A549 (cell line): ENCODE measurements at regions of chr22 and their contacts with region 1.

Region 1: DNA sequence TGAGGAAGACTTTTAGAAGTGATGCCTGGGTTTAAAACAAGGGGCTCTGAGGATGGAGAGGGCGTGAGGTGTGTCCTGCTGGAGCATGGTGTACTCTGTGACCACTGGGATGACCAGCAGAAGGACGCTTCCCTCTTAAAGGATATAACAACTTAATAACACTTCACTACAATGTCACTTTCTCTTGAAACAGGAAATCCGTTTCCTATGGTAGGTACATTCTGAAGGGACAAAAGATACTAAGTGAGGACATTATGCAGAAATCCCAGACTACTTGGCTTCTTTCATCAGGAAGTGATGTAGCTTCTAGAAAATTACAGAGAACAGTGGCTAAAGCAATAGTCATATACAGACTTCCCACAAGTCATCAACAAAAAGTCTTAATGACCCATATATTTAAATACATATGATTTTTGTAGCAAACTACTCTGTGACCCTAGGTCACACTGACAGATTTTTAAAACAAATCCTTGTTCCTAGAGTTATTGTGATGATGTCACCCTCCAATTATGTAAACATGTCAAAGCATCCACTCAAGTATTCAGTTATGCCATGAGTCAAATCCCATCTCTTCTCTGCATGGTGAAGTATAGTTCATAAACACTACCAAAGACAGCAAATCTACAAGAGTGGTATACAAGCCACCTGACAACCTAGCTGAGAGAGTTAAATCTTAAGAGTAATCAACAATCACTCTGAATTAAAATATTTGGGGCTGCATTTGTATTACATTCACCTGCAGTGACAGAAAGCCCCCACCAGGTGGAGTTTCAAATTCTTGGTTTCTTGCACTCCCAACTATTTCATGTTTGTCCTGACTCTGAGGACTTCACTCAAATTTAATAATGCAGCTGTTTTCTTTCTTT is 32.8 kb downstream of the PITPNB start:
- DNase-seq: peak; percentile 10 to 44
- ATAC-seq: peak in 1 of 2 experiments; percentile 60; a peak in 2 of 6 replicates
- H3K4me3 ChIP-seq: no peak overlapping the region
- H3K27ac ChIP-seq: no peak overlapping the region
- H3K4me1 ChIP-seq: peaks cover 10% of the 10 kb centered on the region
- CTCF ChIP-seq: peak; percentile 52
- EP300 ChIP-seq: no peak
- POLR2A ChIP-seq: no peak
- RAD21 ChIP-seq: 0 out of 5 replicates have a peak, but pooled peaks have one; percentile 11 to 30

Region 2: GRCh38 chr22:27867114-27867952 is 18.9 kb before region 1 on chr22:
- CTCF ChIA-PET with region 1: interaction called, 18 read pairs
- POLR2A ChIA-PET with region 1: no interaction called
- DNase-seq: peak in 1 of 2 experiments; percentile 31
- ATAC-seq: peak in 1 of 2 experiments; percentile 40; a peak in 3 of 6 replicates
- H3K4me3 ChIP-seq: 0 out of 3 replicates have a peak overlapping the region, but pooled peaks have one; percentile 6
- H3K27ac ChIP-seq: peak overlapping the region; percentile 65 to 71; a peak in 5 of 6 replicates
- H3K4me1 ChIP-seq: peaks cover 76% of the 10 kb centered on the region
- CTCF ChIP-seq: no peak
- EP300 ChIP-seq: no peak
- POLR2A ChIP-seq: no peak
- RAD21 ChIP-seq: no peak

Region 3: DNA sequence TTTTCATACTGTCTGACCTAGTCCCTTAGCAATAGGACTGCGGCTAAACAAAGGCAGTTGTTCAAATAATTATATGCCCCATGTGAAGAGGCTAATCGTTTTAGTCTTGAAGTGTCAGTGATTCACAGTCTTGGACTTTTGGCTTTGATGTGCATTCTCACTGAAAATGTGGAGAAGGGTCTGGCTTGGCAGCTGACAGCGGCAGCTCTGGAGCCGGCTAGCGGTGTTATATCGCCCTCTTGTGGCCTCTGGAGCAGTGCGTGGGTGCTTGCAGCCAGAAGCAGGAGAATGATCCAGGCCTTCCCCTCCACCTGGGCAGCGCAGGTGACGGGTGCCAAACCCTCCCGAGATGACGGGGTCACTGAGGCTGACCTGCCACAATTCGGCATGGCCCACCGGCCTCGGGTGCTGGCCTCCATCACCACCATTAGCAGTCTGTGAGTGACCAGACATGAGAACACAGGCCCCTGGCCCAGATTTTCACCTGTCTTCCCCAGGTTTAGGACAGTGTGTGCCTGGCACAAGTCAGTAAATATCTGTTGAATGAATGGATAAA is 123.1 kb after region 1 on chr22:
- CTCF ChIA-PET with region 1: interaction called, 29 read pairs
- POLR2A ChIA-PET with region 1: no interaction called
- DNase-seq: peak; percentile 58 to 74
- ATAC-seq: peak; percentile 90 to 96
- H3K4me3 ChIP-seq: no peak overlapping the region
- H3K27ac ChIP-seq: no peak overlapping the region
- H3K4me1 ChIP-seq: 0 out of 3 replicates have a peak, but pooled peaks cover 2% of the 10 kb centered on the region
- CTCF ChIP-seq: peak; percentile 78
- EP300 ChIP-seq: no peak
- POLR2A ChIP-seq: no peak
- RAD21 ChIP-seq: peak; percentile 87